ENCODE measurements at regions of chr6 and their contacts with region 1.

Region 1: GRCh38 chr6:10962673-10963072 is 75.8 kb downstream of the SYCP2L start:
- DNase-seq: no peak
- H3K4me3 Mint-ChIP-seq: no peak overlapping the region
- H3K27ac Mint-ChIP-seq: no peak overlapping the region
- H3K4me1 Mint-ChIP-seq: no peaks in the 10 kb centered on the region
- H3K27me3 Mint-ChIP-seq: peaks cover 7% of the 10 kb centered on the region

Region 2: GRCh38 chr6:9985481-9985880 is 977.2 kb before region 1 on chr6:
- CTCF ChIA-PET with region 1: no interaction called
- POLR2A ChIA-PET with region 1: no interaction called
- intact Hi-C with region 1: loop called (anchors 10 kb)
- DNase-seq: no peak
- H3K4me3 Mint-ChIP-seq: no peak overlapping the region
- H3K27ac Mint-ChIP-seq: no peak overlapping the region
- H3K4me1 Mint-ChIP-seq: no peaks in the 10 kb centered on the region
- H3K27me3 Mint-ChIP-seq: no peaks in the 10 kb centered on the region

Region 3: DNA sequence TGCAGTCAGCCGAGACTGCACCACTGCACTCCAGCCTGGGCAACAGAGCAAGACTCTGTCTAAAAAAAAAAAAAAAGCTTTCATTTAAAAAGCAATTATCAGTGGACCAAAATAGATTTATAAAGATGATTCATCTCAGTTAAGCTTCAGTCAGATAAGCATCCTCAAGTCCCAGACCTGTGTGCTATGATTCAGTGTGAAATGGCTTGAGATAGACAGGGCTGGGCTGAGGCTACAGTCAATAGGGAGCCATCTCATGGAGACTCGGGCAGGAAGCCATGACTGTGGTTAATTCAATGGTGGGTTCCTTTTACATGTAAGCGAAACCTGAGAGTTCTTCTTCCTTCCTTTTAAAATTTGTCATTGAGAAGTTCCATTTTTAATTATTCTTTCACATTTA is 823.8 kb before region 1 on chr6:
- CTCF ChIA-PET with region 1: no interaction called
- POLR2A ChIA-PET with region 1: no interaction called
- intact Hi-C with region 1: no loop called
- DNase-seq: no peak
- H3K4me3 Mint-ChIP-seq: no peak overlapping the region
- H3K27ac Mint-ChIP-seq: no peak overlapping the region
- H3K4me1 Mint-ChIP-seq: no peaks in the 10 kb centered on the region
- H3K27me3 Mint-ChIP-seq: no peaks in the 10 kb centered on the region

Measured in activated CD4-positive, alpha-beta memory T cell treated with anti-CD3 and anti-CD28 coated beads for 36 hours (primary cell).